ENCODE measurements at regions of chr3 and their contacts with region 1.

Region 1: GRCh38 chr3:138923531-138923994 is 23.4 kb downstream of the FOXL2 start:
- DNase-seq: peak; percentile 72 to 90 (median 82)
- ATAC-seq: peak; percentile 95
- H3K4me3 ChIP-seq: no peak overlapping the region
- H3K4me3 Mint-ChIP-seq: peak overlapping the region; percentile 0
- H3K27ac ChIP-seq: no peak overlapping the region
- H3K27ac Mint-ChIP-seq: no peak overlapping the region
- H3K4me1 ChIP-seq: peaks cover 5% of the 10 kb centered on the region
- H3K4me1 Mint-ChIP-seq: no peaks in the 10 kb centered on the region
- H3K27me3 ChIP-seq: no peaks in the 10 kb centered on the region
- H3K27me3 Mint-ChIP-seq: peaks cover 22% of the 10 kb centered on the region
- CTCF ChIP-seq: peak; percentile 94

Region 2: DNA sequence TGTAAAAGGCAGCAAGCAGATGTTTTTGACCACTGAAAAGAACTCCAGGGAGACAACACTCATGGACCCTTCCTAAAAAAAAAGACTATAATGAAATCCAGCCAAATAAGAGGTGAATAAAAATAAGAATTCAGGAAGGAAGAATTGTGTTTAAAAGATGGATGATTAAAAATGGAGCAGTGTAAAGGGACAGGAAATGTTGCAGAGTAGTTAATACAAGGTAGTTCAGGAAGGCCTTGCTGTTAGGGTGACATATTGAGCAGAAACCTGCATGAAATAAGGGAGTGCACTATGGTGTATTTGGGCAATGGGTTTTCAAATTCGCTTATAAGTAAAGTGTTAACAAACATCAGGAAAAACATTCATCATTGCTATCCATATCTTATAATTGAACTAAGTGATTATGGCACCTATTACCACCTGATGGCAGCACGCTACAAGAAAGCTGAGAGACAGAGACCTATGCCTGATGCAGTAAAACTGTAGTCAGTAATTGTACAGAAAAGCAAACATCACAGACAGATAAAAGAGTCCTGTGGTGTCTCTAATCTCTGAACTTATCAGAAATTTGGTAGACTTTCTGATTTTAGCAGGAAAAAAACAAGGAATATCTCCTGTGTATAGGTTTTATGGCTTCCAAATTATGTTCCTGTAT is 743.1 kb before region 1 on chr3:
- CTCF ChIA-PET with region 1: no interaction called
- POLR2A ChIA-PET with region 1: no interaction called
- intact Hi-C with region 1: loop called (anchors 5 kb)
- DNase-seq: peak in 10 of 14 experiments; percentile 4 to 67 (median 29)
- ATAC-seq: peak; percentile 88
- H3K4me3 ChIP-seq: no peak overlapping the region
- H3K4me3 Mint-ChIP-seq: no peak overlapping the region
- H3K27ac ChIP-seq: no peak overlapping the region
- H3K27ac Mint-ChIP-seq: no peak overlapping the region
- H3K4me1 ChIP-seq: no peaks in the 10 kb centered on the region
- H3K4me1 Mint-ChIP-seq: no peaks in the 10 kb centered on the region
- H3K27me3 ChIP-seq: peaks cover 0 to 8% of the 10 kb centered on the region in 2 experiments
- H3K27me3 Mint-ChIP-seq: peaks cover 4% of the 10 kb centered on the region
- CTCF ChIP-seq: peak; percentile 70

Region 3: GRCh38 chr3:138329127-138329983 is 594.2 kb before region 1 on chr3 and contains the start of gene NME9:
- CTCF ChIA-PET with region 1: no interaction called
- POLR2A ChIA-PET with region 1: no interaction called
- intact Hi-C with region 1: loop called (anchors 5 to 10 kb)
- DNase-seq: peak; percentile 80 to 97 (median 90)
- ATAC-seq: peak; percentile 85
- H3K4me3 ChIP-seq: peak within 1 kb of the TSS; percentile 69
- H3K4me3 Mint-ChIP-seq: peak within 1 kb of the TSS; percentile 98
- H3K27ac ChIP-seq: peak within 1 kb of the TSS; percentile 49 to 81
- H3K27ac Mint-ChIP-seq: peak within 1 kb of the TSS; percentile 88
- H3K4me1 ChIP-seq: peaks cover 20% of the 10 kb centered on the region
- H3K4me1 Mint-ChIP-seq: peaks cover 37% of the 10 kb centered on the region
- H3K27me3 ChIP-seq: no peaks in the 10 kb centered on the region
- H3K27me3 Mint-ChIP-seq: no peaks in the 10 kb centered on the region
- CTCF ChIP-seq: peak; percentile 71
- total RNA-seq, gene NME9: 0.80 TPM in 1 of 2 experiments, not detected in the other

Region 4: DNA sequence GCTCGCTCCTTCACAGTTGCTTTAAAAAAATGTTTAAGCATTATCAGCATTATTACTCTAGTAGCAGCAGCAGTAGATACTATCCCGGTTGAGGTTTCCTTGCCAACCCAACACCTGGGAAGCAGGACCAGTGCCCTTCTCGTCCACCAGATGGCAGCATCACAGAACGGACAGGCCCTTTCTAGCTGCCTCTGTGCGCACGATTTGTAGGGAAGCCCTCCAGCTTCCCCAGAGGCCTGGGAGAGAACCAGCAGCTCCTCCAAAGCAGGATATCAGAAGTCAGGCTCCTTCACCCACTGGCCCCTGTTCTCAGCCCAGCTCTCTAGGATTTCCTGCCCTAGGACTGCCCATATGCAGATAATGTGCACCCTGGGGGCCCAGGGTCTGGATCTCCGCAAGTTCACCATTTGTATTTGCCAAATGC is 506.0 kb before region 1 on chr3:
- CTCF ChIA-PET with region 1: interaction called, 16 read pairs
- POLR2A ChIA-PET with region 1: no interaction called
- intact Hi-C with region 1: loop called (anchors 1 to 2 kb)
- DNase-seq: peak; percentile 38 to 76 (median 49)
- ATAC-seq: peak; percentile 69
- H3K4me3 ChIP-seq: no peak overlapping the region
- H3K4me3 Mint-ChIP-seq: no peak overlapping the region
- H3K27ac ChIP-seq: no peak overlapping the region
- H3K27ac Mint-ChIP-seq: no peak overlapping the region
- H3K4me1 ChIP-seq: no peaks in the 10 kb centered on the region
- H3K4me1 Mint-ChIP-seq: no peaks in the 10 kb centered on the region
- H3K27me3 ChIP-seq: no peaks in the 10 kb centered on the region
- H3K27me3 Mint-ChIP-seq: peaks cover 22% of the 10 kb centered on the region
- CTCF ChIP-seq: peak; percentile 90

Region 5: DNA sequence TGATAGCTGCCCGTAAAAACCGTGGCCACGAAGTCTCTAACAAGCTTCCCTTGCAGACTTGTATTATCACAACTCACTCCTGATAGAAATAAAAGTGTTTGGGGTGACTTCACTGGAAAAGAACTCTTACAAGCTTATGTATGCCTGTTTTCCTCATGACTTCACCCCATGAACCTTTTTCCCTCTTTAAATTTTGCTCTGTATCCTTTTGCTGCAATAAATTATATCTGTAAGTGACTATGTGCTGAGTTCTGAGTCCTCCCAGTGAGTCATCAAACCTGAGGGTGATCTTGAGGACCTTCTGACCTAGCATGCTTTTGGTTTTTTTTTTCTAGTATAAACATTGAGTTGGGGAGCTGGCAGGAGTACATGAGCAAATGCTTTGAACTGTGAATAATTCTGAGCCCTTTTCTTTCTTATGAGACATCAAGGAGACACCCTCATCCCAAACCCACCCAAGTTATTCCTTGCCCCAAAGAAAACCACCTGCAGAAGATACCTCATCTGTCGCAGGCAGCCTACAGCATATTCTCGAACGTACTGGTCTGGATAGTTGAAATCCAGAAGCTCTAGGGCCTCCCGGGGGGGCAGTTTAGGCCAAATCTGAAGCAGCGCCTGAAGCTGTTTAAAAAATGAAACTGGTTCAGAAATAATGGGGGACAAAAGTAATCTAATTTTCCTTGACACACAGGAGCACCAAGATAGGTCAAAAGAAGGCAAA is 229.1 kb before region 1 on chr3:
- CTCF ChIA-PET with region 1: interaction called, 13 read pairs
- POLR2A ChIA-PET with region 1: no interaction called
- intact Hi-C with region 1: loop called in 1 of 2 experiments (anchors 2 kb)
- DNase-seq: no peak
- ATAC-seq: no peak
- H3K4me3 ChIP-seq: no peak overlapping the region
- H3K4me3 Mint-ChIP-seq: no peak overlapping the region
- H3K27ac ChIP-seq: no peak overlapping the region
- H3K27ac Mint-ChIP-seq: no peak overlapping the region
- H3K4me1 ChIP-seq: no peaks in the 10 kb centered on the region
- H3K4me1 Mint-ChIP-seq: no peaks in the 10 kb centered on the region
- H3K27me3 ChIP-seq: no peaks in the 10 kb centered on the region
- H3K27me3 Mint-ChIP-seq: no peaks in the 10 kb centered on the region
- CTCF ChIP-seq: no peak

Region 6: DNA sequence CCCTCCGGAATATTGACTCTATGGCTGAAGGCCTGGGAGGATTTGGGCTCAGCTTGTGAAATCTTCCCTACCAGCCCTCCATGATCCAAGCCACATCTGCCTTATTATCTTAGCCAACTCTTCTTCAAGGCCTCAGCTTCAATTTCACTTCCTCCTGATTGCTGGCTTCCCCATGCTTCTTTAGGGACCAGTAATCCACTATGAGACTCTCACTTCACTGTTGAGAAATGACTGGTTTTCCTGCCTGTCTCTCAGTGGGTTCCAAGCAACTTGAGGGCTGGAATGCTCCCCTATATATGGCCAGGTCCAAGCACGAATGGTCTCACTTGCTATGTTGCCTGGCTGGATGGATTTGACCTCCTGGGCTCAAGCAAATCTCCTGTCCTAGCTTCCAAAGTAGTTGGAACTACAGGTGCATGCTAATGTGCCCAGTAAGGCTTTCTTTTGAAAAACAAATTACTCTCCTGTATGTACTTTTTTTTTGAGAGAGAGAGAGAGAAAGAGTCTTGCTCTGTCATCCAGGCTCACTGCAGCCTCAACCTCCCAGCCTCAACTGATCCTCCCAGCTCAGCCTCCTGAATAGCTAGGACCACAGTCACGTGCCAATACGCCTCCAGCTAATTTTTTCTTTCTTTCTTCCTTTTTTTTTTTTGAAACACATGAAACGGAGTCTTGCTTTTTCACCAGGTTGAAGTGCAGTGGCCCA is 80.9 kb before region 1 on chr3:
- CTCF ChIA-PET with region 1: no interaction called
- POLR2A ChIA-PET with region 1: no interaction called
- intact Hi-C with region 1: no loop called
- DNase-seq: peak in 1 of 14 experiments; percentile 28
- ATAC-seq: no peak
- H3K4me3 ChIP-seq: no peak overlapping the region
- H3K4me3 Mint-ChIP-seq: peak overlapping the region; percentile 64
- H3K27ac ChIP-seq: no peak overlapping the region
- H3K27ac Mint-ChIP-seq: no peak overlapping the region
- H3K4me1 ChIP-seq: no peaks in the 10 kb centered on the region
- H3K4me1 Mint-ChIP-seq: no peaks in the 10 kb centered on the region
- H3K27me3 ChIP-seq: no peaks in the 10 kb centered on the region
- H3K27me3 Mint-ChIP-seq: no peaks in the 10 kb centered on the region
- CTCF ChIP-seq: no peak

Region 7: GRCh38 chr3:138935848-138936740 is 12.5 kb after region 1 on chr3:
- CTCF ChIA-PET with region 1: interaction called, 15 read pairs
- POLR2A ChIA-PET with region 1: interaction called, 3 read pairs
- intact Hi-C with region 1: no loop called
- DNase-seq: peak; percentile 44 to 83 (median 63)
- ATAC-seq: peak; percentile 82
- H3K4me3 ChIP-seq: peak overlapping the region; percentile 43
- H3K4me3 Mint-ChIP-seq: peak overlapping the region; percentile 80
- H3K27ac ChIP-seq: no peak overlapping the region
- H3K27ac Mint-ChIP-seq: no peak overlapping the region
- H3K4me1 ChIP-seq: peaks cover 47% of the 10 kb centered on the region
- H3K4me1 Mint-ChIP-seq: peaks cover 40% of the 10 kb centered on the region
- H3K27me3 ChIP-seq: peaks cover 75 to 80% of the 10 kb centered on the region in 2 experiments
- H3K27me3 Mint-ChIP-seq: peaks cover 92% of the 10 kb centered on the region
- CTCF ChIP-seq: peak; percentile 95

Measured in CD4-positive, alpha-beta T cell (primary cell).